ENCODE measurements at regions of chr7 and their contacts with region 1.

Region 1: GRCh38 chr7:39517240-39517639 is 49.0 kb upstream of the YAE1 start:
- DNase-seq: no peak
- ATAC-seq: no peak
- H3K4me3 ChIP-seq: no peak overlapping the region
- H3K27ac ChIP-seq: no peak overlapping the region
- H3K4me1 ChIP-seq: peaks cover 10% of the 10 kb centered on the region
- H3K27me3 ChIP-seq: peaks cover 0 to 12% of the 10 kb centered on the region in 2 experiments; a peak in 2 of 5 replicates
- CTCF ChIP-seq: no peak
- EP300 ChIP-seq: no peak
- POLR2A ChIP-seq: no peak
- RAD21 ChIP-seq: no peak

Region 2: DNA sequence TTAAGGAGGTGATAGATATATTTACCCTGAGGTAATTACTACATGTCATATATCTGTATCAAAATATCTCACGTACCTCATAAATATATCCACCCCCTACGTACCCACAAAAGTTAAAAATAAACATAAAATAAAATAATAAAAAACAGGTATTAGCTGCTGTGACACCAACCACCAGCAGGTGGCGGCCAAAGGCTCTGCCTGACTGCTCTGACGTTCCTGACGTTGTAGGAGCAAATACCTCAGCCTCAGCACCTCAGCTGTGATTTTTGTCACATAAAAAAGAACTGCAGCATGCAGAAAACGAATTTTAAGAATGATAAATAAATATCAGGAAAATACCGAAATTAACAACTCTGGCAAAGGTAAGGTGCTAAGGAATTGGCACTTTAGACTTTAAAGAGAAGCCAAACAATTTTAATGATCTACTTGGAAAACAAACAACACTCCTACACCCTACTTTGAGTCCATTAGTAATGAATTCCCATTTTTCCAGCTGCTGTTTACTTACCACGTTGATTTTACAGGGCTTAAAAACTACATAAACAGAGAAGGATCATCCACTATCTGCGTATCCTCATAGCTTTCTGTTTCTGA is 1118.4 kb before region 1 on chr7:
- CTCF ChIA-PET with region 1: interaction called, 14 read pairs
- POLR2A ChIA-PET with region 1: no interaction called
- in situ Hi-C with region 1: no loop called
- intact Hi-C with region 1: no loop called
- DNase-seq: peak; percentile 21
- ATAC-seq: peak; percentile 69
- H3K4me3 ChIP-seq: no peak overlapping the region
- H3K27ac ChIP-seq: no peak overlapping the region
- H3K4me1 ChIP-seq: no peaks in the 10 kb centered on the region
- H3K27me3 ChIP-seq: no peaks in the 10 kb centered on the region
- CTCF ChIP-seq: peak; percentile 71
- EP300 ChIP-seq: no peak
- POLR2A ChIP-seq: no peak
- RAD21 ChIP-seq: no peak

Region 3: GRCh38 chr7:38796626-38797501 is 720.4 kb before region 1 on chr7:
- CTCF ChIA-PET with region 1: interaction called, 8 read pairs
- POLR2A ChIA-PET with region 1: no interaction called
- in situ Hi-C with region 1: no loop called
- intact Hi-C with region 1: loop called (anchors 1 kb)
- DNase-seq: peak; percentile 46
- ATAC-seq: no peak
- H3K4me3 ChIP-seq: no peak overlapping the region
- H3K27ac ChIP-seq: no peak overlapping the region
- H3K4me1 ChIP-seq: no peaks in the 10 kb centered on the region
- H3K27me3 ChIP-seq: no peaks in the 10 kb centered on the region
- CTCF ChIP-seq: peak; percentile 72
- EP300 ChIP-seq: no peak
- POLR2A ChIP-seq: no peak
- RAD21 ChIP-seq: peak; percentile 52; the same call in 1 of the 2 replicates

Region 4: GRCh38 chr7:38932509-38933168 is 584.6 kb before region 1 on chr7:
- CTCF ChIA-PET with region 1: interaction called, 6 read pairs
- POLR2A ChIA-PET with region 1: no interaction called
- in situ Hi-C with region 1: loop called (anchors 5 kb)
- intact Hi-C with region 1: loop called (anchors 1 kb)
- DNase-seq: peak; percentile 28
- ATAC-seq: peak; percentile 54; the same call in 2 of the 3 replicates
- H3K4me3 ChIP-seq: no peak overlapping the region
- H3K27ac ChIP-seq: no peak overlapping the region
- H3K4me1 ChIP-seq: no peaks in the 10 kb centered on the region
- H3K27me3 ChIP-seq: no peaks in the 10 kb centered on the region
- CTCF ChIP-seq: peak; percentile 75
- EP300 ChIP-seq: no peak
- POLR2A ChIP-seq: no peak
- RAD21 ChIP-seq: 0 out of 2 replicates have a peak, but pooled peaks have one; percentile 28

Region 5: DNA sequence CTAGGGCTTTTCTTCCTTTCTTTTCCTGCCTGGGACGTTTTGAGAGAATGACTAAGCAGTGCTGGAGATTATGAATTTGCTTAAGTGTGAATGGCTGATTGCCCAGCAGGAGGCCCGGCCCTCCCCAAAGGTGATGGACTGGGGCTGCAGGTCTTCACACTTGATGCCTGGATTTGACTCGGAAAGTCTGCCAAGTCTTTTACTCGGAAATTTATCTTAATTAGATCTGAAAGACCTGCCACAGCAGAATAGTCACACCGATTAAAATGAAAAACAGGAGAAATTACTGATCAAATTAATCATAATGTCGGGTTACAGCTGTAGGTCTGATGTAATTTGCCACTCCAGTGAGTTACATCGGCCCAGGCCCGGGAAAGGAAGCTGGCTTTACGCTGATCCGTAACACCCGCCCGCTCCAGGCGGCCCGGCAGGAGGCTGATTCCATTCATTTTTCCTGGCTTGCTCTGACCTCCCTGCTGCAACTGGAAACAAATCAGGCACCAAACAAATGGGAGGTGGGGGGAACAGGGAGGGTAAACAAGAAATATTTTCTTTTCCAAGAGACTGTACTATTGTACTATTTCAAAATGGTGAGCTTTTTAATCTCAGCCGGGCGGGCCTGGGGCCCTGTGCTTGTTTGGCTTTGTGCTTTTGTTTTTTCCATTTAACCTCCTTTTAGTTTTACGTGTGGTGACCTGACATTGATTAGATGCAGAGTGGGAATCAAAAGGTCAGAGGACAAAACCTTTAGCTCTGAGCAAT is 163.4 kb before region 1 on chr7:
- CTCF ChIA-PET with region 1: no interaction called
- POLR2A ChIA-PET with region 1: no interaction called
- in situ Hi-C with region 1: no loop called
- intact Hi-C with region 1: no loop called
- DNase-seq: no peak
- ATAC-seq: peak; percentile 93
- H3K4me3 ChIP-seq: no peak overlapping the region
- H3K27ac ChIP-seq: no peak overlapping the region
- H3K4me1 ChIP-seq: no peaks in the 10 kb centered on the region
- H3K27me3 ChIP-seq: peaks cover 0 to 21% of the 10 kb centered on the region in 2 experiments; a peak in 3 of 5 replicates
- CTCF ChIP-seq: no peak
- EP300 ChIP-seq: no peak
- POLR2A ChIP-seq: no peak
- RAD21 ChIP-seq: no peak

Region 6: DNA sequence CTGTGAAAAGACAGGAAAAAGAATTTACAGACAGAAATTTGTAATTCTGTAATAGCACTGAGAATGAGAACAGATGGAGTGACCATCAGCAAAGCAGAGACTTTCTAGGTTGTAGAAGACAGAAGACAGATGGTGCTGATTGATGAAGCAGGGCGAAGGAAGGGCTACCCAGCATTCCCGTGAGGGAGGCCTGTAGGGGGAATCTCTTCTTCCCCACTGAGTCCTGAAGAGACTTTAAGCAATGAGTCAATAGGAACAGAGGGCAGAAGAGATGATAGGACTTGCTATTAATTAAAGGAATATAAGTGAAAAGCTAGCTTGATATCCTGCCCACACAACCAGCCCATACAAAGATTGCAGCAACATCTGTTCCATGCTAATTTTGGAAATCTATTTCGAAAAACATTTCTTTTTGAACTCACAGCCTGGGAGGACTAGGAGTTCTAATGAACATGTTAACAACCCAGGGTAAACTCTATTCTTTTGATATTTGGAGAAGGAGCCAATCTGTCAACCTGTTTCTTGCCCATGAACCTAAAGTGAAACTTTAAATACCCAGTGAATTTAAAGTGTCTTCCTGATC is 150.2 kb after region 1 on chr7:
- CTCF ChIA-PET with region 1: no interaction called
- POLR2A ChIA-PET with region 1: no interaction called
- in situ Hi-C with region 1: no loop called
- intact Hi-C with region 1: no loop called
- DNase-seq: no peak
- ATAC-seq: no peak
- H3K4me3 ChIP-seq: no peak overlapping the region
- H3K27ac ChIP-seq: no peak overlapping the region
- H3K4me1 ChIP-seq: no peaks in the 10 kb centered on the region
- H3K27me3 ChIP-seq: no peaks in the 10 kb centered on the region
- CTCF ChIP-seq: no peak
- EP300 ChIP-seq: no peak
- POLR2A ChIP-seq: no peak
- RAD21 ChIP-seq: no peak

Measured in HepG2 (cell line).